ENCODE measurements at regions of chr17 and their contacts with region 1.

Region 1: DNA sequence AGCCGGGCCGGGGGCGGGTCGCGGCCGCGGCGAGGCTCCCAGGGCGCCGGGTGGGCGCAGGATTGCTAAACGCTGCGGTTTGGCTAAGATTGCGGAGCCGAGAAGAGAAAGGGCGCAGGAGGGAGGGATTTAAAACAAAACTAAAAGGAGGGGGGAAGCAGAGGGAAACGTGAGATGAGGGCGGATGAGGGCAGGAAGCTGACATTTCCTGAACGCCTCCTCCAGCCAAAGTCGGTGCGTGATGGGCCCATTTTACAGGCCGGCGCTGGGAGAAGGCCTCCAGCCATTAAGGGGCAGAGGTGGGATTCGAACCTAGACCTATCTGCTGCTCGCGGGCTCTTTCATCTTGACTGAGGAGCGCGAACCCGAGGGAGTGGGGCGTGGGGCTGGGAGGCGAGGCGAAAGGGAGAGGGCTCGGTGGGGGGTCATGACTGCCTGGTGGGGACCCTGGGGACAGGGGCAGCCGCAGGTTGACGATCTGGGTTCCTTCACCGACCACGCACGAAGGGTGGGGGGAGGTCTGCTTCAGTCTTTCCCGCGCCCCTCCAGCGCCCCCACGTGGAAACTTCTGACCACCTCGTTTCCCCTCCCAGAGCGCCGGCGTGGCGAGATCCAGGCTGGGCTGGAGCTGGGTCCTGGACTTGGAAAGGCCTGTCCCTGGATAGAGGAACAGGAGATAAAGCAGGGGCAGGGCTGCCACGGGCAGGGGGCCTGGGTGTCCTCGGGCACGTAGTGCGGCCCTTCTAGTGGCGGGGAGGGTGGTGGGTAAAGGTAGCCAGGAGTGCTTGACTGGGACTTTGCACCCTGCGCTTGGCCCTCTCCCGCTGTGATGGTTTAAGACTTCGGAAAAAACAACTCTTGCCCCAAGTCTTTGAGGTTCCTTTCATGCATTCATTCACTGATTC is 3.8 kb upstream of the TAC4 start:
- DNase-seq: peak; percentile 78 to 88 (median 82)
- H3K4me3 ChIP-seq: peak overlapping the region in 3 of 4 donors; percentile 28 to 87 (median 40)
- H3K27ac ChIP-seq: peak overlapping the region in 2 of 5 donors; percentile 1 to 61
- H3K4me1 ChIP-seq: peaks cover 0 to 19% of the 10 kb centered on the region in 2 donors
- H3K27me3 ChIP-seq: no peaks in the 10 kb centered on the region
- CTCF ChIP-seq: peak; percentile 52 to 75 (median 72)
- POLR2A ChIP-seq: no peak

Region 2: DNA sequence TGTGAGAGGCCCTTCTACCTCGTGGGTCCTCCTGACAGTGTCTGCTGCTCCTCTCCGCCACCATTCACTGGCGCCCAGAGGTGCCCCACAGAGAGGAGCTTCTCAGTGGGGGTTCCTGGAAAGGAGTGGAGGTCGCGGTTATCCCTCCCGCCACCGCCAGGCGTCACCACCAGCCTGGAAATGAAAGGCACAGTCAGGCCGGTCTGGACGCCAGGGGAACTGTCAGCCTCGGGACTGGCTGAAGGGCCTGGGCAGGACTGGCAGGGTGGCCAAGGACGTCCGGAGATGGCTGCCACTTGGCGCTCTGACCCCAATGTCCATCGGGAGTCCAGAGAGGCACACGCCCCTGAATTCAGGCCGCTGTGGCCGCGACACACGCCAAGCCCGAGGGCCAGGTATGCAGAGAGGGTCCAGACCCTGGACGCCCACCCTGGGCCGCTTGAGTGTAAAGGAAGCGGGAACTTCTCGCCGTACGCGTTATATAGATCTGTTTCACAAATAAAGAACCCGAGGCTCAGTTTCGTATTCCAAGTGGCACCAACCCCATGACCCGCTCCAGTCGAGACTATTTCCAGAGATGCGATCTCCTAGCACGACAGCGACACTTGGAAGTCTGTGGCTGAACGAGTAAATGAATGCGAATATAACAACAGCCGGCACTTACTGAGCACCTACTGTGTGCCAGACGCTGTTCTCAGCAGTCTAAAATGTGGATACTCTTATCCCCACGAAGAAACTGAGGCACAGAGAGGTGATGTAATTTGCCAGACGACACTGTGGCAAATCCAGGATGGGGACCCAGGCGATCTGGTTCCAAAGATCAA is 283.6 kb before region 1 on chr17:
- intact Hi-C with region 1: loop called (anchors 2 to 10 kb)
- DNase-seq: peak; percentile 90 to 97 (median 95)
- H3K4me3 ChIP-seq: peak overlapping the region in 2 of 4 donors; percentile 23 to 46
- H3K27ac ChIP-seq: peak overlapping the region; percentile 38 to 83 (median 63)
- H3K4me1 ChIP-seq: peaks cover 4 to 21% of the 10 kb centered on the region in 2 donors
- H3K27me3 ChIP-seq: peaks cover 6% of the 10 kb centered on the region
- CTCF ChIP-seq: peak; percentile 89 to 100 (median 99)
- POLR2A ChIP-seq: peak in 1 of 2 donors; percentile 27

Region 3: GRCh38 chr17:49575579-49576087 is 276.0 kb before region 1 on chr17 and contains the start of gene NXPH3:
- intact Hi-C with region 1: loop called in 1 of 2 experiments (anchors 10 kb)
- DNase-seq: peak in 4 of 7 donors; percentile 47 to 58 (median 49)
- H3K4me3 ChIP-seq: peak within 1 kb of the TSS in 3 of 4 donors; percentile 7 to 68 (median 11)
- H3K27ac ChIP-seq: peak within 1 kb of the TSS in 2 of 5 donors; percentile 38 to 45
- H3K4me1 ChIP-seq: peaks cover 4 to 9% of the 10 kb centered on the region in 2 donors
- H3K27me3 ChIP-seq: peaks cover 6% of the 10 kb centered on the region
- CTCF ChIP-seq: peak in 3 of 6 experiments; percentile 58 to 81 (median 67)
- POLR2A ChIP-seq: no peak
- total RNA-seq, gene NXPH3: 0.30 to 6.1 (median 1.3) TPM

Region 4: DNA sequence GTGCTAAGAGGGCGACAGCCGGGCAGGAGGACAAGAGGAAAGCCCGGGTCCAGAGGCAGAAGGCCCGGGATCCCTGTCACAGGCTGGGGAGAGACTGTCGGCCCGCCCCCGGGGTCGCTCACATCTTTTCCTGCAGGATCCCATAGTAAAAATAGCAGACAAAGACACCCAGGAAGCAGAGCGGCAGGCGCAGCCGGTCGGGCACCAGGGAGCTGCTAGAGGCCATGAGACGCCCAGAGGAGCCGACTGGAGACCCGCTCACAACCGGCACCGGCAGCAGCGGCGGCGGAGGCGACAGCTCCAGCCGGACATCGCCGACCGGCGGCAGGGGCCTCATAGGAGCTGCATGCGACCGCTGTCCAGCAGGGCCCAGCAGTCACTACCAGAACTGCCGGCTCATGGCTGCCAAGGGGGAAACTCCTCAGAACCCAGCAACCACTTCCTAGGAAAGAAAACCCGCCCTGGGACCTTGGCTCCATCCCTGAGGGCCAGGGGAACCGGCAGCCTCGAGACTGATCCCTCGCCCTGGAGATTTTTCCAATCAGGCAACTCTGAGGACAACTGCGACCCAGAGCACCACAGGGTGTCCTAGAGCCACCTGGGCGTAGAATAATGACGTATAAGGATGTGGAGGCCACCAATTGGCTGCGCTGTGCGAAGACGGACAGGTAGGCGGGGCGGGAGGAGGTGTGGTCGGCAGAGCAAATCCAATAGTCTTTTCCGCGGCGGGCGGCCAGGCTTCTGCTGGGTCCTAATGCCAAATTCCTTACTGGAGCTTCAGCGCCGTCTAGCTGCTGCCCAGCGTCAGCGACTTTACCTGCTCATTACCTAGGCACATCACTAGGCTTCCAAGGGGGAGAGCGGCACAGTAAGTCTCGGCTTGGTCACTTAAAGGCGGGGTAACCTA is 143.8 kb before region 1 on chr17 and contains the start of gene SLC35B1:
- intact Hi-C with region 1: loop called (anchors 5 to 10 kb)
- DNase-seq: peak; percentile 98 to 100 (median 99)
- H3K4me3 ChIP-seq: peak within 1 kb of the TSS; percentile 78 to 84 (median 81)
- H3K27ac ChIP-seq: peak within 1 kb of the TSS; percentile 23 to 96 (median 90)
- H3K4me1 ChIP-seq: peaks cover 10 to 12% of the 10 kb centered on the region in 2 donors
- H3K27me3 ChIP-seq: no peaks in the 10 kb centered on the region
- CTCF ChIP-seq: peak; percentile 48 to 73 (median 64)
- POLR2A ChIP-seq: peak; percentile 55 to 69
- total RNA-seq, gene SLC35B1: 20.9 to 87.9 (median 37.4) TPM

Region 5: GRCh38 chr17:49910094-49910857 is 58.6 kb after region 1 on chr17:
- intact Hi-C with region 1: no loop called
- DNase-seq: peak in 2 of 7 donors; percentile 19 to 25
- H3K4me3 ChIP-seq: peak overlapping the region in 1 of 4 donors; percentile 34
- H3K27ac ChIP-seq: no peak overlapping the region
- H3K4me1 ChIP-seq: peaks cover 6 to 7% of the 10 kb centered on the region in 2 donors
- H3K27me3 ChIP-seq: peaks cover 48% of the 10 kb centered on the region
- CTCF ChIP-seq: no peak
- POLR2A ChIP-seq: no peak